ENCODE measurements at regions of chr17 and their contacts with region 1.

Region 1: DNA sequence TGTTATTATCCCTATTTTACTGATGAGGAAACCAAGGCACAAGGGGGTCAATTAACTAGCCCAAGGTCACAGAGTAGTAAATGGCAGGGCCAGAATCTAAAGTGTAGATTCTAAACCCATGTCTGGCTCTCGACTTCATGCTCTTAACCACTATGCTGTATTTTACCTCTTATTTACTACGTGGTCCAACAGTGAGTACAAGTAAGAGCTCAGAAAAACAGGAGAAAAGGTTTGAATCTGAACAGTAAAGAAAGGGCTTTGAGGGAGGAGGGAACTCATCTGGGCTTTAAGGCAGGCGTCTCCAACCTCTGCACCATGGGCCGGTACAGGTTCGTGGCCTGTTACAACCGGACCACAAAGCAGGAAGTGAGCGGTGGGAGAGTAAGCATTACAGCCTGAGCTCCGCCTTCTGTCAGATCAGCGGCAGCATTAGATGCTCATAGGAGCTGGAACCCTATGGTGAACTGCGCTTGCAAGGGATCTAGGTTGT is 62.9 kb downstream of the SMURF2 start:
- DNase-seq: peak; percentile 56
- H3K4me3 Mint-ChIP-seq: peak overlapping the region; percentile 55
- H3K27ac Mint-ChIP-seq: peak overlapping the region; percentile 67
- H3K4me1 Mint-ChIP-seq: peaks cover 29% of the 10 kb centered on the region
- H3K27me3 Mint-ChIP-seq: no peaks in the 10 kb centered on the region

Region 2: DNA sequence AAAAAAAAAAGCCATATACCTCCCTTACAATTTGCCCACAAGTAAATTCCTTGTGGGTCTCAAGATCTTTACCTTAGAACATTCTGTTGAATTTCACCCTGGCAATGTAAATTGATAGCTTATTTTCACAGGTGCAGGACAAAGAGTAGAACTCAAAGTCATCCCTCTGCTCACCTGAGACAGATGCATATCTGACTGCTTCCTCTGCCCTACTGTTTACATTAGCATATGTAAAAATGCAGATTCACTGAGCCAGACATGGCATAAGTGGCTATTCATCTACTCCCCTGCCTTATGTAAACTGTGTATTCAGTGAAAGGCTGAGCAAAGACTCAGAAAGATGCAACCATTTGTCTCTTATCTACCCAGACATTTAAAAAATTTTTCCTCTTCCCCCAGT is 172.7 kb before region 1 on chr17:
- intact Hi-C with region 1: no loop called
- DNase-seq: no peak
- H3K4me3 Mint-ChIP-seq: no peak overlapping the region
- H3K27ac Mint-ChIP-seq: no peak overlapping the region
- H3K4me1 Mint-ChIP-seq: no peaks in the 10 kb centered on the region
- H3K27me3 Mint-ChIP-seq: peaks cover 16% of the 10 kb centered on the region

Region 3: GRCh38 chr17:64534175-64534574 is 65.1 kb before region 1 on chr17:
- intact Hi-C with region 1: loop called (anchors 5 kb)
- DNase-seq: no peak
- H3K4me3 Mint-ChIP-seq: no peak overlapping the region
- H3K27ac Mint-ChIP-seq: peak overlapping the region; percentile 36
- H3K4me1 Mint-ChIP-seq: peaks cover 14% of the 10 kb centered on the region
- H3K27me3 Mint-ChIP-seq: no peaks in the 10 kb centered on the region

Region 4: GRCh38 chr17:64572638-64573154 is 26.5 kb before region 1 on chr17:
- intact Hi-C with region 1: loop called (anchors 2 kb)
- DNase-seq: peak; percentile 3
- H3K4me3 Mint-ChIP-seq: peak overlapping the region; percentile 40
- H3K27ac Mint-ChIP-seq: peak overlapping the region; percentile 82
- H3K4me1 Mint-ChIP-seq: peaks cover 17% of the 10 kb centered on the region
- H3K27me3 Mint-ChIP-seq: no peaks in the 10 kb centered on the region

Region 5: GRCh38 chr17:64582879-64583632 is 16.2 kb before region 1 on chr17:
- intact Hi-C with region 1: no loop called
- DNase-seq: no peak
- H3K4me3 Mint-ChIP-seq: no peak overlapping the region
- H3K27ac Mint-ChIP-seq: no peak overlapping the region
- H3K4me1 Mint-ChIP-seq: peaks cover 13% of the 10 kb centered on the region
- H3K27me3 Mint-ChIP-seq: no peaks in the 10 kb centered on the region

Region 6: GRCh38 chr17:64615028-64615677 is 15.9 kb after region 1 on chr17:
- intact Hi-C with region 1: no loop called
- DNase-seq: no peak
- H3K4me3 Mint-ChIP-seq: no peak overlapping the region
- H3K27ac Mint-ChIP-seq: no peak overlapping the region
- H3K4me1 Mint-ChIP-seq: no peaks in the 10 kb centered on the region
- H3K27me3 Mint-ChIP-seq: no peaks in the 10 kb centered on the region

Region 7: GRCh38 chr17:64653325-64653984 is 54.2 kb after region 1 on chr17:
- intact Hi-C with region 1: loop called (anchors 1 kb)
- DNase-seq: no peak
- H3K4me3 Mint-ChIP-seq: no peak overlapping the region
- H3K27ac Mint-ChIP-seq: no peak overlapping the region
- H3K4me1 Mint-ChIP-seq: peaks cover 32% of the 10 kb centered on the region
- H3K27me3 Mint-ChIP-seq: no peaks in the 10 kb centered on the region

Region 8: DNA sequence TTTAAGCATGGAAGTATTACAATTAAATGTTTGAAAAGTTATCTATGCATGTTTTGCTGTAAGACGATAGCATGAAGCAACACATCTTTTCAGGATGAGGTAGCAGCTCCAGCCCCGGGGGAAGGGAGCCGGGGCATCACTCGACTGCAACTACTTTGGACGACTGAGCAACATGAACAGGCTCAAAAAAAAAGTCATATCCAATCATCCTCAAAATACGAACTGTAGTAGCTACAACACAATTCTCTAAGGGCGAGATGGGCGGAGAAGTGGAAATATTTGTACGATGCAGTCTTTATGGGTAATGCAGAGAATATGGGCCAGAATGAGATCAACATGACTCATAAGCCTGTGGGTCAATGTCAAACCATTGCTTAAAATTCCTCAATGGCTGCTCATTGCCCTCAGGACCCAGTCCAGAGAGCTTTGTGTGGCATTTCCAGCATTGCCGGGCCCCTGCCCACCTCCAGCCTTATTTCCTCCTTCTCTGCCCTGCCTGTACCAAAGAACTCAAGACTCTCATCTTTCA is 80.5 kb after region 1 on chr17:
- intact Hi-C with region 1: no loop called
- DNase-seq: no peak
- H3K4me3 Mint-ChIP-seq: no peak overlapping the region
- H3K27ac Mint-ChIP-seq: no peak overlapping the region
- H3K4me1 Mint-ChIP-seq: no peaks in the 10 kb centered on the region
- H3K27me3 Mint-ChIP-seq: no peaks in the 10 kb centered on the region

Measured in activated T-helper 1 cell treated with anti-CD3 and anti-CD28 coated beads, Interleukin-12 subunit alpha, Interleukin-12 subunit beta, Interleukin-2, Interleukin-4 antibody, amounts not matched to agents 30 ng/mL and 10 ng/mL and 1 ng/mL, durations not matched to agents 14 hours and 24 hours and 36 hours (primary cell).